ENCODE measurements at regions of chr11 and their contacts with region 1.

Region 1: GRCh38 chr11:2892215-2893020 is 6.8 kb upstream of the CDKN1C start:
- DNase-seq: peak; percentile 76
- H3K4me3 Mint-ChIP-seq: peak overlapping the region; percentile 79
- H3K27ac Mint-ChIP-seq: peak overlapping the region; percentile 80
- H3K4me1 Mint-ChIP-seq: peaks cover 23% of the 10 kb centered on the region
- H3K27me3 Mint-ChIP-seq: peaks cover 3% of the 10 kb centered on the region

Region 2: GRCh38 chr11:2930704-2931428 is 38.4 kb after region 1 on chr11:
- CTCF ChIA-PET with region 1: interaction called, 41 read pairs
- POLR2A ChIA-PET with region 1: interaction called, 22 read pairs
- DNase-seq: peak; percentile 66
- H3K4me3 Mint-ChIP-seq: peak overlapping the region; percentile 73
- H3K27ac Mint-ChIP-seq: peak overlapping the region; percentile 57
- H3K4me1 Mint-ChIP-seq: peaks cover 43% of the 10 kb centered on the region
- H3K27me3 Mint-ChIP-seq: peaks cover 22% of the 10 kb centered on the region

Measured in activated CD4-positive, alpha-beta memory T cell treated with anti-CD3 and anti-CD28 coated beads, Interleukin-2, amount 10 ng/mL, durations not matched to agents 7 days and 5 days (primary cell).